ENCODE measurements at regions of chr20 and their contacts with region 1.

Region 1: GRCh38 chr20:51014797-51015722 is 7.8 kb downstream of the KCNG1 start:
- DNase-seq: peak; percentile 49
- H3K4me3 ChIP-seq: no peak overlapping the region
- H3K27ac ChIP-seq: no peak overlapping the region
- H3K4me1 ChIP-seq: no peaks in the 10 kb centered on the region
- H3K27me3 ChIP-seq: peaks cover 3 to 12% of the 10 kb centered on the region in 2 experiments
- CTCF ChIP-seq: peak; percentile 77 to 79
- POLR2A ChIP-seq: no peak

Region 2: DNA sequence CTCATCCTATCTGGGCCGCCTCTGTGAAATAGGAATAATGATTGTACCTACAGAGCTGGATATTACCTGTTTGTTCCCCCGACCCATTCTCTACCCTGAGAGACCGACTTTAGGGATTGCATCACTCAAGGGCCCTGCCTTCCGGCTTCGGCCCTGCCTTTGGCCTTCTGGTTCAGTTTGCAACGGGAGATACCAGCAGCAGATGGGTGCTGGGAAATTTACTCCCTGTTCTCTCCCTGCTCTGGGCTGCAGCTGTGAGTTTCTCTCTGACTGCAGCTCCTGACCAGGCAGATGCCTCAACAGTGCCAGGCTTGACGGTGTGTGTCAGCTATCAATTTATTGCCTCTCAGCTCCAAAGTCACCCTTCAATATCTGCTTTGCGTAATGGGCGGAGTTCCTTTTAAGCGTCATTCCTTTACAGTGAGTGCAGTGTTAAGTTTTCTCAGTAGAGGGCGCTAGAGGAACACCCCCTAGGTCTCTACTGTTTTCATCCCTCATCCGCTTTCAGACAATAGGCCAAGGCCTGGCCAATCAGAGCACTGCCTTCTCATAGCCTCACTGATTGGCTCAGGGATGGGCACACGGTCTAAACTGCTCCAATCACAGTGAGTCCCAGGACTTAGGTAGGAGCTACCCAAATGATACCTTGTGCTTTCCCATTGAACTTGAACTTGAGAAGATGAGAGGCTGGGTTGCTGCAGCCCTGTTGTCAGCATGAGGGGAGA is 22.2 kb before region 1 on chr20:
- CTCF ChIA-PET with region 1: interaction called, 21 read pairs
- POLR2A ChIA-PET with region 1: no interaction called
- dilution Hi-C with region 1: no loop called
- intact Hi-C with region 1: no loop called
- DNase-seq: peak; percentile 69
- H3K4me3 ChIP-seq: no peak overlapping the region
- H3K27ac ChIP-seq: no peak overlapping the region
- H3K4me1 ChIP-seq: no peaks in the 10 kb centered on the region
- H3K27me3 ChIP-seq: peaks cover 4 to 6% of the 10 kb centered on the region in 2 experiments
- CTCF ChIP-seq: peak; percentile 59 to 67
- POLR2A ChIP-seq: no peak

Region 3: GRCh38 chr20:51001758-51002157 is 13.3 kb before region 1 on chr20:
- CTCF ChIA-PET with region 1: interaction called, 11 read pairs
- POLR2A ChIA-PET with region 1: no interaction called
- dilution Hi-C with region 1: no loop called
- intact Hi-C with region 1: no loop called
- DNase-seq: no peak
- H3K4me3 ChIP-seq: no peak overlapping the region
- H3K27ac ChIP-seq: no peak overlapping the region
- H3K4me1 ChIP-seq: no peaks in the 10 kb centered on the region
- H3K27me3 ChIP-seq: peaks cover 6% of the 10 kb centered on the region in 2 experiments
- CTCF ChIP-seq: no peak
- POLR2A ChIP-seq: no peak

Region 4: GRCh38 chr20:51029963-51030920 is 15.2 kb after region 1 on chr20:
- CTCF ChIA-PET with region 1: interaction called, 47 read pairs
- POLR2A ChIA-PET with region 1: no interaction called
- dilution Hi-C with region 1: no loop called
- intact Hi-C with region 1: no loop called
- DNase-seq: no peak
- H3K4me3 ChIP-seq: no peak overlapping the region
- H3K27ac ChIP-seq: no peak overlapping the region
- H3K4me1 ChIP-seq: peaks cover 4% of the 10 kb centered on the region
- H3K27me3 ChIP-seq: peaks cover 24 to 36% of the 10 kb centered on the region in 2 experiments
- CTCF ChIP-seq: no peak
- POLR2A ChIP-seq: no peak

Region 5: GRCh38 chr20:51059862-51060261 is 44.8 kb after region 1 on chr20:
- CTCF ChIA-PET with region 1: no interaction called
- POLR2A ChIA-PET with region 1: no interaction called
- dilution Hi-C with region 1: no loop called
- intact Hi-C with region 1: no loop called
- DNase-seq: no peak
- H3K4me3 ChIP-seq: no peak overlapping the region
- H3K27ac ChIP-seq: no peak overlapping the region
- H3K4me1 ChIP-seq: no peaks in the 10 kb centered on the region
- H3K27me3 ChIP-seq: peaks cover 9 to 16% of the 10 kb centered on the region in 2 experiments
- CTCF ChIP-seq: no peak
- POLR2A ChIP-seq: no peak

Region 6: GRCh38 chr20:51255417-51255816 is 240.4 kb after region 1 on chr20:
- CTCF ChIA-PET with region 1: interaction called, 10 read pairs
- POLR2A ChIA-PET with region 1: no interaction called
- dilution Hi-C with region 1: no loop called
- intact Hi-C with region 1: no loop called
- DNase-seq: no peak
- H3K4me3 ChIP-seq: no peak overlapping the region
- H3K27ac ChIP-seq: no peak overlapping the region
- H3K4me1 ChIP-seq: no peaks in the 10 kb centered on the region
- H3K27me3 ChIP-seq: peaks cover 5 to 11% of the 10 kb centered on the region in 2 experiments
- CTCF ChIP-seq: no peak
- POLR2A ChIP-seq: no peak

Measured in endothelial cell of umbilical vein (primary cell).